ENCODE measurements at regions of chr2 and their contacts with region 1.

Region 1: GRCh38 chr2:68121873-68122679 is 35.6 kb upstream of the PNO1 start:
- H3K4me3 ChIP-seq: no peak overlapping the region
- H3K27ac ChIP-seq: no peak overlapping the region
- H3K4me1 ChIP-seq: peaks cover 6% of the 10 kb centered on the region; the same call in 1 of the 2 replicates
- CTCF ChIP-seq: peak; percentile 80

Region 2: GRCh38 chr2:67895227-67895941 is 226.7 kb before region 1 on chr2:
- CTCF ChIA-PET with region 1: no interaction called
- POLR2A ChIA-PET with region 1: no interaction called
- H3K4me3 ChIP-seq: no peak overlapping the region
- H3K27ac ChIP-seq: peak overlapping the region; percentile 47
- H3K4me1 ChIP-seq: peaks cover 13% of the 10 kb centered on the region
- CTCF ChIP-seq: no peak

Region 3: GRCh38 chr2:68135448-68136320 is 13.6 kb after region 1 on chr2:
- CTCF ChIA-PET with region 1: interaction called, 10 read pairs
- POLR2A ChIA-PET with region 1: no interaction called
- H3K4me3 ChIP-seq: no peak overlapping the region
- H3K27ac ChIP-seq: no peak overlapping the region
- H3K4me1 ChIP-seq: no peaks in the 10 kb centered on the region
- CTCF ChIP-seq: no peak

Region 4: GRCh38 chr2:68214381-68214780 is 92.3 kb after region 1 on chr2:
- CTCF ChIA-PET with region 1: no interaction called
- POLR2A ChIA-PET with region 1: no interaction called
- H3K4me3 ChIP-seq: no peak overlapping the region
- H3K27ac ChIP-seq: no peak overlapping the region
- H3K4me1 ChIP-seq: peaks cover 17% of the 10 kb centered on the region
- CTCF ChIP-seq: no peak

Region 5: DNA sequence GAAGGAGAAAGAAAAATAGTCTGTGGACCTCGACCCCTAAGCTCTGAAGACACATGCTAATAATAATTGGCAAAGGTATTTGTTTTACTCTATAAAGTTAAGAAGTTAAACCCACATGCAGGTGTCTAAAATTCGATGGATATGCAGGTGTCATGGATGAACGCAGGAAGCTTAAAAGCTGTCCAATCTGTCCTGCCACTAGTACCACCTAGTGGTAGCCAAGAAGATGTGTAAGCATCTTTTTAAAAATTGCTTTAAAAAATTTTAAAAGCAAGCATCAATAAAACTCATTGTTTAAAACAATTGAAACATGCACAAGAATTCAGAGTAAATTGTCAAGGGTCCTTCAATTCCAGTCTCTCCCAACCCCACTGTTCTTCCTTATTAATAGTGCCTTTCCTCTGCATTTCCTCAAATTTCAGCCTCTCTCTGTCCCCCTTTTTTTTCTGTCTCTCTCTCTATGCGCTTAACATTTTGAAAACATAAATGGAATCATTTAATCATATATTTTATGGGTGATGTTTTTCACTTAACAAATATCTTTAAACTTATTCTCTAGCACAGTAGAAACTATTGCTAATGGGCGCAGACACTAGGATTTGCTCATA is 160.8 kb after region 1 on chr2:
- CTCF ChIA-PET with region 1: interaction called, 31 read pairs
- POLR2A ChIA-PET with region 1: no interaction called
- H3K4me3 ChIP-seq: no peak overlapping the region
- H3K27ac ChIP-seq: no peak overlapping the region
- H3K4me1 ChIP-seq: peaks cover 7% of the 10 kb centered on the region
- CTCF ChIP-seq: no peak

Region 6: DNA sequence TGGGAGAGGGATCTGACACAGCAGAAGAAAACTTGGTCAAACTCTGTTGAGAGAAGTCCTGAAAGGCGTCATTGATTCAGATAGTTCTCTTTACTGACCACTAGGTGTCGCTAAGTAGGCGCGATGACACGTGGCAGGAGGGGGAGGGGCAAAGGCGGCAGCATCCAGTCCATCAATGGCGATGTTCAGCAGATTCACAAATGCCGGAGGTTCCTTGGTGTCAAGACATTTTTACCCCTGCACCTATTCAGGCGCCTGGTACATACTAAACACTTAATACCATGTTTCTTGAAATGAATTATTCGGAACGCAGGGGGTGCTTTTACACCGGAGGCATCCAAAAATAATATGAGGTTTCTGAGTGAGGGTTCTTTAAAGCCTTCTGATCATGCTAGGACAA is 240.0 kb after region 1 on chr2:
- CTCF ChIA-PET with region 1: interaction called, 11 read pairs
- POLR2A ChIA-PET with region 1: no interaction called
- H3K4me3 ChIP-seq: no peak overlapping the region
- H3K27ac ChIP-seq: no peak overlapping the region
- H3K4me1 ChIP-seq: no peaks in the 10 kb centered on the region
- CTCF ChIP-seq: peak; percentile 39; the same call in 1 of the 2 replicates

Measured in HEK293 (cell line).